GM12878 (cell line): ENCODE measurements at regions of chr1 and their contacts with region 1.

Region 1: DNA sequence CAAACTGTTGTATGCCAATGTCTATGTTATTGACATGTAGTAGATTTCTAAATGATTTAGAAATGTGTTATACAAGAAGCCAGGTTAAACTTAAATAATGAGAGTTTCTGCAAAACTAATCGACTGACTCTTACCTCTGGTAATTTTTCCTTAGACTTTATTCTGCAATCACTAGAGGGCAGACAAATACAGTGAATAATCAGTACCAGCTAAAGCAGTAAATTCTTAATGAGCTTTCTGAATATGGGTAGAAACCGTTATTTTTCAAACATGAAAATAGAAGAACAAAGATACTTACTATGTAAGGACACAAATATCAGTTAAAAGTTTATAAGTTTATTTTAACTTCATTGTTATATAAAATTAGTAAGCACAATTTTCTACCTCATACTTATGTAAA is 97.9 kb upstream of the RGS1 start:
- DNase-seq: peak; percentile 17
- ATAC-seq: peak; percentile 81
- H3K4me3 ChIP-seq: no peak overlapping the region
- H3K27ac ChIP-seq: no peak overlapping the region
- H3K4me1 ChIP-seq: no peaks in the 10 kb centered on the region
- H3K27me3 ChIP-seq: no peaks in the 10 kb centered on the region
- CTCF ChIP-seq: peak; percentile 38 to 76 (median 43); a peak in 5 of 6 replicates
- EP300 ChIP-seq: no peak
- POLR2A ChIP-seq: no peak
- RAD21 ChIP-seq: peak; percentile 94

Region 2: GRCh38 chr1:192539297-192540092 is 61.9 kb after region 1 on chr1:
- CTCF ChIA-PET with region 1: interaction called, 10 read pairs
- POLR2A ChIA-PET with region 1: no interaction called
- RAD21 ChIA-PET with region 1: interaction called, 10 read pairs
- SMC1A ChIA-PET with region 1: interaction called, 5 read pairs
- in situ Hi-C with region 1: no loop called
- intact Hi-C with region 1: no loop called
- DNase-seq: no peak
- ATAC-seq: peak; percentile 40
- H3K4me3 ChIP-seq: no peak overlapping the region
- H3K27ac ChIP-seq: peak overlapping the region; percentile 81
- H3K4me1 ChIP-seq: peaks cover 24% of the 10 kb centered on the region
- H3K27me3 ChIP-seq: no peaks in the 10 kb centered on the region
- CTCF ChIP-seq: no peak
- EP300 ChIP-seq: no peak
- POLR2A ChIP-seq: no peak
- RAD21 ChIP-seq: no peak

Region 3: DNA sequence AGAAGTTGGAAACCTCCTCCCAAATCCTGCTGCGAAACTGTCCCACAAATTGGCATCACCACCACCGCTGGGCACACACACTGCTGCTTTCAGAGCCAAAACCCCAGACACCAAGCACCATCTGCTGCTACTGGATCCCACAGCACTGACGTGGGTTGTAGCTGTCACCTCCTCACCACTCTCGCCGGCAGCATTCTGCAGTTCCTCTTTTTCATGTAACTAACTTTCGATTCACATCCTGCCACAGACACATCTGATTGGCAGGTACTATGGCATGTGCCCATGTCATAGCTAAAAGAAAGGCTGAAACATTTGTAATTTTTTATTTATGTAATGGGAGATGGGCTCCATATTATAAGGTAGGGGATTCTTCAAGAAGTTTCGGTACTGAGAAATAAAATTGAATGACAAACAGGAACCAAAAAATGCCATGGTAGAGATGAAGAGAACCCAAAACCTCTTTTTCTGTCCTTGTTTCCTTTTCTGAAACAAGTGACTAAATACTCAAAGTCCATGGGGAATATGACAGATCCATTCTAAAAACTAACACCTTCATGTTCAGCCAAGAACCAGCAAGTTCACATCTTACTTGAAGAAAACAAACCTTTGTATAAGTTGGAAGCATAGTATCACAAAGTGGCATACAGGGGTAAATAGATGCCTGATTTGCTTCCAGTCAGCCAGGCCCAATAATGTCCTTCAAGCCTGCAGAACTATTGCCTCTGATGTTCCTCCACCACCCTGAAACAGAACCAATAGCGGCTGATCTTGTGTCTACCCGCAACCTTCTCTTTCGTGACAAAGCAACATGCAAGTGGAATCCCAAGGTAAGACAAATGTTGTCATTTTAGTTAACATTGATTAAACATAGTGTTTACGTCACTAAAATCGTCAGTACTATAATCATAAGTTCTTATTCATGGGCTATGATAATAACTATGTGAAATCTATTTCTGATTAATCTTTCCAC is 131.8 kb after region 1 on chr1:
- CTCF ChIA-PET with region 1: interaction called, 211 read pairs
- POLR2A ChIA-PET with region 1: interaction called, 4 read pairs
- RAD21 ChIA-PET with region 1: interaction called, 174 read pairs
- SMC1A ChIA-PET with region 1: interaction called, 255 read pairs
- in situ Hi-C with region 1: loop called (anchors 5 kb)
- intact Hi-C with region 1: loop called (anchors 1 kb)
- DNase-seq: peak; percentile 96
- ATAC-seq: peak; percentile 90
- H3K4me3 ChIP-seq: peak overlapping the region; percentile 8; the same call in 1 of the 2 replicates
- H3K27ac ChIP-seq: peak overlapping the region; percentile 88
- H3K4me1 ChIP-seq: peaks cover 23% of the 10 kb centered on the region
- H3K27me3 ChIP-seq: no peaks in the 10 kb centered on the region
- CTCF ChIP-seq: peak in 2 of 3 experiments; percentile 6 to 55; a peak in 3 of 6 replicates
- EP300 ChIP-seq: peak; percentile 98 to 100
- POLR2A ChIP-seq: no peak
- RAD21 ChIP-seq: peak; percentile 60; the same call in 1 of the 2 replicates

Region 4: GRCh38 chr1:192797891-192798290 is 320.3 kb after region 1 on chr1:
- CTCF ChIA-PET with region 1: interaction called, 168 read pairs
- POLR2A ChIA-PET with region 1: no interaction called
- RAD21 ChIA-PET with region 1: interaction called, 61 read pairs
- SMC1A ChIA-PET with region 1: interaction called, 114 read pairs
- in situ Hi-C with region 1: loop called (anchors 5 kb)
- intact Hi-C with region 1: loop called (anchors 2 kb)
- DNase-seq: no peak
- ATAC-seq: no peak
- H3K4me3 ChIP-seq: no peak overlapping the region
- H3K27ac ChIP-seq: no peak overlapping the region
- H3K4me1 ChIP-seq: no peaks in the 10 kb centered on the region
- H3K27me3 ChIP-seq: no peaks in the 10 kb centered on the region; a peak in 1 of 4 replicates
- CTCF ChIP-seq: no peak
- EP300 ChIP-seq: no peak
- POLR2A ChIP-seq: no peak
- RAD21 ChIP-seq: no peak

Region 5: GRCh38 chr1:193025218-193025617 is 547.6 kb after region 1 on chr1:
- CTCF ChIA-PET with region 1: interaction called, 156 read pairs
- POLR2A ChIA-PET with region 1: no interaction called
- RAD21 ChIA-PET with region 1: interaction called, 39 read pairs
- SMC1A ChIA-PET with region 1: interaction called, 45 read pairs
- in situ Hi-C with region 1: no loop called
- intact Hi-C with region 1: loop called (anchors 5 kb)
- DNase-seq: no peak
- ATAC-seq: no peak
- H3K4me3 ChIP-seq: no peak overlapping the region
- H3K27ac ChIP-seq: no peak overlapping the region
- H3K4me1 ChIP-seq: no peaks in the 10 kb centered on the region
- H3K27me3 ChIP-seq: no peaks in the 10 kb centered on the region
- CTCF ChIP-seq: no peak
- EP300 ChIP-seq: no peak
- POLR2A ChIP-seq: no peak
- RAD21 ChIP-seq: no peak